MCF 10A (cell line): ENCODE measurements at regions of chr5 and their contacts with region 1.

Region 1: GRCh38 chr5:32585446-32586275 is at the start of gene SUB1:
- DNase-seq: peak; percentile 92
- H3K4me3 Mint-ChIP-seq: peak within 1 kb of the TSS; percentile 95
- H3K27ac Mint-ChIP-seq: peak within 1 kb of the TSS; percentile 94
- H3K4me1 Mint-ChIP-seq: peaks cover 21% of the 10 kb centered on the region
- H3K27me3 Mint-ChIP-seq: no peaks in the 10 kb centered on the region
- CTCF ChIP-seq: no peak
- total RNA-seq, gene SUB1: 269 and 302 TPM in 2 replicates

Region 2: DNA sequence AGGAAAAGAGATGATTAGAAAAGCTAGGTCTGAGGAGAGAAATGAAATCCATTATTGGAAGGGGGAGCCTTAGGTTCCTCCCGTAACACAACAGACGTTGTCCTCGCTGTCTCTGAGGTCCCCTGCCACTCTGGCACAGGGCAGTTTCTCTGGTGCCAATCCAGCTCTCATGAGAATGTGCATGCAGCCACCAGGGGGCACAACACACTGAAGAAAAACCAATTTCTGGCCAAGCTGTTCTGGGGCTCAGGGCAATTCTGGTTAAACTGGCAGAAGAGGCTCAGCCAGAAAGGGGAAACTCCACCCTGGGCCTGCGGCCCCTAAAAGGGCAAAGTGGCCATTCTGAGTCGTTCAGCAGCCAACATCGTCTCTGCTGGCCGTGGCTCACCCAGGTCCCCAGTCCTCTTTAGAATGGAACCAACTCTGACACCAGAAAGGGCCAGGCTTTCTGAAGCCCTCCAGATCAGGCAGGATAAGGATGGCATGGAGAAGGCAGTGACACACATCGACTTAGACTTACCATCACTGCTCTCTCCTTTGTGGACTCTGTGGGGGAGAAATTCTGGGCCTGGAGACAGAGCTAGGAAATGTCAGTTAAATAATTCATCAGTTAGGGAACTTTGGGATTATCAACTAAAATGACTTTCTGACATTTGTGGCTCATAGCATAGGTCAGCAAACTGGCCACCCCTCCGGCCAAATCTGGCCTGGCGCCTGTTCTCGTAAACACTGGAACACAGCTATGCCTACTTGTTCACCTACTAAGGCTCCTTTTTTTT is 353.0 kb before region 1 on chr5:
- CTCF ChIA-PET with region 1: interaction called, 35 read pairs
- POLR2A ChIA-PET with region 1: interaction called, 4 read pairs
- intact Hi-C with region 1: loop called (anchors 5 kb)
- DNase-seq: peak; percentile 75
- H3K4me3 Mint-ChIP-seq: no peak overlapping the region
- H3K27ac Mint-ChIP-seq: no peak overlapping the region
- H3K4me1 Mint-ChIP-seq: no peaks in the 10 kb centered on the region
- H3K27me3 Mint-ChIP-seq: no peaks in the 10 kb centered on the region
- CTCF ChIP-seq: peak; percentile 62

Region 3: GRCh38 chr5:32465076-32465475 is 120.6 kb before region 1 on chr5:
- CTCF ChIA-PET with region 1: interaction called, 11 read pairs
- POLR2A ChIA-PET with region 1: no interaction called
- intact Hi-C with region 1: no loop called
- DNase-seq: peak; percentile 9
- H3K4me3 Mint-ChIP-seq: no peak overlapping the region
- H3K27ac Mint-ChIP-seq: no peak overlapping the region
- H3K4me1 Mint-ChIP-seq: peaks cover 5% of the 10 kb centered on the region
- H3K27me3 Mint-ChIP-seq: no peaks in the 10 kb centered on the region
- CTCF ChIP-seq: no peak

Region 4: DNA sequence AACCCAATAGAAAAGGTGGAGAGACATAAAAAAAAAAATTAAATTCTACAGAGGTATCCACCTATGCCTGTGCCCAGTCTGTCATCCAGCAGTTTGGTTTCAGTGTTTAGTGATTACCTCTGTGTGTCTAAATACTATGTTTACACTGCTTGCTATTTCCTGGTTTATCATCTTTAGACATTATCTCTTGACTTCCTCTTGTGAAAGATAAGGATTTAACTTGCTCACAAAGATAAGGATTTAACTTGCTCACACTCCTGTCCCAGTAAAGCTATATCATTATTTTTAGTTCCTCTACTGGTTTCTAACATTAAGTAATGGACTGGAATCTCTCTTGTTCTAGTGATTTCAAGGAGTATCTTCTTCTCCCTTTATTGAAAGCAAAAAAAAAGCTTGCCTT is 87.2 kb before region 1 on chr5:
- CTCF ChIA-PET with region 1: interaction called, 13 read pairs
- POLR2A ChIA-PET with region 1: interaction called, 3 read pairs
- intact Hi-C with region 1: no loop called
- DNase-seq: no peak
- H3K4me3 Mint-ChIP-seq: no peak overlapping the region
- H3K27ac Mint-ChIP-seq: no peak overlapping the region
- H3K4me1 Mint-ChIP-seq: no peaks in the 10 kb centered on the region
- H3K27me3 Mint-ChIP-seq: no peaks in the 10 kb centered on the region
- CTCF ChIP-seq: no peak

Region 5: GRCh38 chr5:32600057-32600622 is 14.5 kb after region 1 on chr5:
- CTCF ChIA-PET with region 1: interaction called, 13 read pairs
- POLR2A ChIA-PET with region 1: interaction called, 3 read pairs
- intact Hi-C with region 1: no loop called
- DNase-seq: peak; percentile 76
- H3K4me3 Mint-ChIP-seq: peak overlapping the region; percentile 6
- H3K27ac Mint-ChIP-seq: no peak overlapping the region
- H3K4me1 Mint-ChIP-seq: peaks cover 24% of the 10 kb centered on the region
- H3K27me3 Mint-ChIP-seq: no peaks in the 10 kb centered on the region
- CTCF ChIP-seq: no peak